ENCODE measurements at regions of chr22 and their contacts with region 1.

Region 1: GRCh38 chr22:37843741-37843990 is 468 bp downstream of the ANKRD54 start:
- DNase-seq: no peak
- ATAC-seq: peak; percentile 63
- H3K4me3 ChIP-seq: peak overlapping the region; percentile 62
- H3K27ac ChIP-seq: peak overlapping the region; percentile 48; the same call in 1 of the 2 replicates
- H3K4me1 ChIP-seq: no peaks in the 10 kb centered on the region
- H3K27me3 ChIP-seq: no peaks in the 10 kb centered on the region
- CTCF ChIP-seq: no peak
- POLR2A ChIP-seq: no peak
- RAD21 ChIP-seq: no peak

Region 2: GRCh38 chr22:37807410-37808293 is 36.0 kb before region 1 on chr22 and contains the start of gene GCAT:
- CTCF ChIA-PET with region 1: no interaction called
- POLR2A ChIA-PET with region 1: no interaction called
- dilution Hi-C with region 1: no loop called
- in situ Hi-C with region 1: no loop called
- intact Hi-C with region 1: loop called (anchors 5 kb)
- DNase-seq: peak; percentile 95
- ATAC-seq: peak; percentile 89
- H3K4me3 ChIP-seq: peak within 1 kb of the TSS; percentile 77
- H3K27ac ChIP-seq: peak within 1 kb of the TSS; percentile 42
- H3K4me1 ChIP-seq: peaks cover 12% of the 10 kb centered on the region
- H3K27me3 ChIP-seq: no peaks in the 10 kb centered on the region
- CTCF ChIP-seq: no peak
- POLR2A ChIP-seq: peak; percentile 80
- RAD21 ChIP-seq: no peak
- total RNA-seq, gene GCAT: 25.6 and 32.3 TPM in 2 replicates